HEK293 (cell line): ENCODE measurements at regions of chr15 and their contacts with region 1.

Region 1: GRCh38 chr15:78195735-78196201 is 38.6 kb downstream of the ACSBG1 start:
- H3K4me3 ChIP-seq: no peak overlapping the region
- H3K27ac ChIP-seq: no peak overlapping the region
- H3K4me1 ChIP-seq: no peaks in the 10 kb centered on the region
- CTCF ChIP-seq: peak; percentile 83

Region 2: GRCh38 chr15:77966540-77967290 is 229.1 kb before region 1 on chr15:
- CTCF ChIA-PET with region 1: interaction called, 16 read pairs
- POLR2A ChIA-PET with region 1: no interaction called
- H3K4me3 ChIP-seq: no peak overlapping the region
- H3K27ac ChIP-seq: no peak overlapping the region
- H3K4me1 ChIP-seq: no peaks in the 10 kb centered on the region
- CTCF ChIP-seq: no peak

Region 3: GRCh38 chr15:78120523-78120922 is 75.2 kb before region 1 on chr15:
- CTCF ChIA-PET with region 1: interaction called, 21 read pairs
- POLR2A ChIA-PET with region 1: no interaction called
- H3K4me3 ChIP-seq: no peak overlapping the region
- H3K27ac ChIP-seq: no peak overlapping the region
- H3K4me1 ChIP-seq: 0 out of 2 replicates have a peak, but pooled peaks cover 2% of the 10 kb centered on the region
- CTCF ChIP-seq: no peak

Region 4: GRCh38 chr15:78131295-78132061 is 64.3 kb before region 1 on chr15 and contains the start of gene CIB2:
- CTCF ChIA-PET with region 1: interaction called, 22 read pairs
- POLR2A ChIA-PET with region 1: no interaction called
- H3K4me3 ChIP-seq: peak within 1 kb of the TSS; percentile 74
- H3K27ac ChIP-seq: peak within 1 kb of the TSS; percentile 85
- H3K4me1 ChIP-seq: peaks cover 2% of the 10 kb centered on the region; the same call in 1 of the 2 replicates
- CTCF ChIP-seq: peak; percentile 30; the same call in 1 of the 2 replicates

Region 5: GRCh38 chr15:78170848-78171773 is 24.7 kb before region 1 on chr15:
- CTCF ChIA-PET with region 1: interaction called, 83 read pairs
- POLR2A ChIA-PET with region 1: no interaction called
- H3K4me3 ChIP-seq: no peak overlapping the region
- H3K27ac ChIP-seq: no peak overlapping the region
- H3K4me1 ChIP-seq: no peaks in the 10 kb centered on the region
- CTCF ChIP-seq: no peak

Region 6: DNA sequence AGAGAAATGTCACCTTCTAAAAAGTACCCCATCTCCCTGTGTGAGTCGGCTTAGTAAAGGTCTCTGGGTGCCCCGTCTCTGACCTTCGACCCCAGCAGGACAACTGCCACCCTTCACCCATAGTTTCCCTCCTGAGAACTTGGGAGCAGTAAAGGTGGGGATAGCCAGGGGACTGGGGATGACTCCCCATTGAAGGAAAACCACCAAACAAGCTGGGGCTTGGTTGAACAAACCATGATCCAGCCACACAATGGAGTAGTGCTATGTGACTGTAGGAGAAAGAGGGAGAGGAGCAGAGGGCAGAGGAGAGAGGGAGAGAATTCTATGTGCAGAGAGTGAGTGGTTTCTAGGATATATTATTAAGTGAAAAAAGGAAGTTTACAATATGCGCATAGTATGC is 12.9 kb before region 1 on chr15:
- CTCF ChIA-PET with region 1: interaction called, 83 read pairs
- POLR2A ChIA-PET with region 1: no interaction called
- H3K4me3 ChIP-seq: no peak overlapping the region
- H3K27ac ChIP-seq: no peak overlapping the region
- H3K4me1 ChIP-seq: no peaks in the 10 kb centered on the region
- CTCF ChIP-seq: no peak

Region 7: DNA sequence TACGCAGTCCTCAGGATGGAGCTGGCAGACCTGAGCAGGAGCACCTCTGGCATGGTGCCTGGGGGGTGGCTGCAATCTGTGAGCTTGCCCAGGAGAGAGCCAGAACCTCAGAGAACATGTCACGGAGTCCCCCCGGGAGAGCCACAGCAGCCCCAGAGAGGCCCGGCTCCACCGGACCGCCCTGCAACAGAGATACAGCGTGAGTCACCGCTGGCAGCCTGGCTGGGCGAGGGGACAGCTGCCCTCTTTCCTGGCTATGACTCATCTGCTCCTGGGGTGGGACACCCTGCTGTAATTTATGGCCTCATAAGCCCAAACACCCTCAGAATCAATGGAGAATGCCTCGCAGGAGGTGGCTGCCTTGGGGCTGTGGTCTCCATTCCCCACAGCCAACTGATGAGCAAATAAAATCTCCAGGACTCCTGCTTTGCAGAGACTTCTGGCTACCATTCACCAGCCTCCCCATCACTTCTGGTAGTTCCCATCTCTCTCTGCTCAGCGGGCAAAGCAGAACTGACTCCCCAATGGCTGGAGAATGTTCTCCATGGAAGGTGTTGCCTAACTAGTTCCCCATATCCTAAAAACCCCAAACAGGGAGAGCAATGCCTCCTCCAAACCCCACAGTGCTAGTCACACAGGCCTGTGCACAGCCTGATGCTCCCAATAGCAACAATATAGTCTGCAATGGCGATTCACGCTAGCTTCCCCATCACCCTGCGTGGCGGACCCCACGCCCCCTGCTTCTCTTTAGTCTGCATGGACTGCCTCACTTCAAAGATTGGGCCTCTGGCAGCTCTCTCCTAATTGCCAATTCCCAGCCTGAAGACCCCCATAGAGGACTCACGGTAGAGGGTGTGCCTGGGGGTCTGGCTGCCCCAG is 17.0 kb after region 1 on chr15:
- CTCF ChIA-PET with region 1: interaction called, 15 read pairs
- POLR2A ChIA-PET with region 1: no interaction called
- H3K4me3 ChIP-seq: no peak overlapping the region
- H3K27ac ChIP-seq: peak overlapping the region; percentile 25; the same call in 1 of the 2 replicates
- H3K4me1 ChIP-seq: peaks cover 12% of the 10 kb centered on the region
- CTCF ChIP-seq: no peak

Region 8: DNA sequence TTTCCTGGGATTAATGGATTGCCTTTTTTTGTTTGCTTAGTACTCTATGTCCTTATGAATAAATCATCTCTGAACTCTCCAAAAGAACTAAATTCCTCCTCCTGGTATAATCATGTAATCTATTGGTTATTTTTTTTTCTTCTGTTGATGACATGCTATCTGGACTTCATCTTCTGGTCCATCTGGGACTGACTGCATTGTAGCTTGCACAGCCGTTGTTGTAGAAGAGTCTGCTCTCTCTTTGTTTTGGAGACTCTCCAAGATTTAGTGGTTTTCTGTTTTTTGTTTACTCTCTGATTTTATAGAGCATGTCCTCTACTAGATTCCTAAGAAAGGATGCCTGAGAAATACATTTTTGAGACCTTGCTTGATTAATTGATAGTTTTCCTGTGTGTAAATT is 261.3 kb after region 1 on chr15:
- CTCF ChIA-PET with region 1: no interaction called
- POLR2A ChIA-PET with region 1: no interaction called
- H3K4me3 ChIP-seq: no peak overlapping the region
- H3K27ac ChIP-seq: no peak overlapping the region
- H3K4me1 ChIP-seq: peaks cover 53% of the 10 kb centered on the region
- CTCF ChIP-seq: no peak